GM12878 (cell line): ENCODE measurements at regions of chr4 and their contacts with region 1.

Region 1: DNA sequence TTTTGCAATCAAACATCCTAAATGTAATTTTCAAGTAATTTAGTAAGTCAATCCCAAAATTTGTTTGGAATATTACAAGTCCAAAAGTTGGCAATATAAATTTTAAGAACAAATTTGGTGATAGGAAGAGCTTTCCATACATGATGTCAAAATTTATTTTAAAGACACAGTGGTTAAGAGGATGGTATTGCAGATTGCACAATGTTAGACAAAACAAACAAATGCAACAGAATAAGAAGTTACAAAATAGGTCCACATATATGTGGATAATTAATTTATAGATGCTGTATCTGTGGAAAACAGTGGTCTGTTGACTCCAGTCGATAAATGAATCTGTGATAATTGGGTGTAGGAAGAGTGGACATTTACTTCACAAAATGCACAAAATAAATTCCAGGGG is 358.5 kb downstream of the PCDH7 start:
- DNase-seq: no peak
- ATAC-seq: no peak
- H3K4me3 ChIP-seq: no peak overlapping the region
- H3K27ac ChIP-seq: no peak overlapping the region
- H3K4me1 ChIP-seq: no peaks in the 10 kb centered on the region
- H3K27me3 ChIP-seq: no peaks in the 10 kb centered on the region
- CTCF ChIP-seq: no peak
- EP300 ChIP-seq: no peak
- POLR2A ChIP-seq: no peak
- RAD21 ChIP-seq: no peak

Region 2: GRCh38 chr4:30429813-30430761 is 648.6 kb before region 1 on chr4:
- CTCF ChIA-PET with region 1: no interaction called
- POLR2A ChIA-PET with region 1: no interaction called
- RAD21 ChIA-PET with region 1: no interaction called
- SMC1A ChIA-PET with region 1: no interaction called
- in situ Hi-C with region 1: no loop called
- intact Hi-C with region 1: loop called (anchors 5 kb)
- DNase-seq: no peak
- ATAC-seq: peak; percentile 37
- H3K4me3 ChIP-seq: no peak overlapping the region
- H3K27ac ChIP-seq: no peak overlapping the region
- H3K4me1 ChIP-seq: no peaks in the 10 kb centered on the region
- H3K27me3 ChIP-seq: no peaks in the 10 kb centered on the region
- CTCF ChIP-seq: no peak
- EP300 ChIP-seq: no peak
- POLR2A ChIP-seq: no peak
- RAD21 ChIP-seq: no peak